ENCODE measurements at regions of chr12 and their contacts with region 1.

Region 1: DNA sequence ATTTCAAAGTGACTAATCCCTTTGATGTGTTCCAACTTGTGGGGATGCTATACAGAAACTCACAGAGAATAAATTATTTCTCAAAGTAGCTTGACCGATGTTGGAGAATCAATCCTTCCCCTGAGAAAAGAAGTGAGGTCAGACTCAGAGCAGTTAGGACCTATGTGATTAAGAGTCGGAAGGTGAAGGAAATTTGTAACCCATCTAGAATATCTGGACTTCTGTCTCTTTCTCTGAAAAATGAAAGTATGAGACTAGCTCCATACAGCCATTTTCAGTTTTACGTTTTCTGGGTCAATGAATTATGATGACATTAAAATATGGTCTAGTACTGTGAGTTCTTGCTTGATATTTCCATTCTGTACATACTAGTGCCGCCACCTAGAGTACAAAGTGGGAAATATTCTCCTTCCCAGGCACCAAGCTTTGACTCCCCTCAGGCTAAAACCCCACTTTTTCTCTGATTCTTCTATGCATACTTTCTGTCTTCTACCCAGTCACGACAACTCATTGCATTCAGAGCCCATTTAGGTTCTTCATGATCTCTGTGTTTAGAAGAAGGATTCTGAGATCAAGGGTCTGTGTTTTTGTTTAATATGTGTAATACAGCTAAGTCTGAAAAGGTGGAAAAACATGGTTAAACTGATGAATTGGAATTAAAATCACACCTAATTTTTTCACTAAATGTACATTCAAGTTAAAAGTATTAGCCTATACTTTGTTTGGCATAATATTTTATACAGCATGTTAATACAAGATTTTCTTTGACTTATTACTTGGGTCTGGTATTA is 6.9 kb upstream of the NTS start:
- DNase-seq: peak in 2 of 9 donors; percentile 2 to 10
- ATAC-seq: peak; percentile 45
- H3K4me3 ChIP-seq: no peak overlapping the region
- H3K4me3 Mint-ChIP-seq: no peak overlapping the region
- H3K27ac ChIP-seq: no peak overlapping the region
- H3K27ac Mint-ChIP-seq: no peak overlapping the region
- H3K4me1 ChIP-seq: no peaks in the 10 kb centered on the region
- H3K4me1 Mint-ChIP-seq: no peaks in the 10 kb centered on the region
- H3K27me3 ChIP-seq: no peaks in the 10 kb centered on the region
- H3K27me3 Mint-ChIP-seq: peaks cover 0 to 2% (median 0%) of the 10 kb centered on the region in 5 donors

Region 2: GRCh38 chr12:85468356-85469157 is 398.6 kb before region 1 on chr12:
- CTCF ChIA-PET with region 1: no interaction called
- POLR2A ChIA-PET with region 1: no interaction called
- intact Hi-C with region 1: loop called (anchors 1 kb)
- DNase-seq: peak in 6 of 9 donors; percentile 4 to 27 (median 14)
- ATAC-seq: peak; percentile 60
- H3K4me3 ChIP-seq: no peak overlapping the region
- H3K4me3 Mint-ChIP-seq: peak overlapping the region; percentile 48 to 92 (median 82)
- H3K27ac ChIP-seq: no peak overlapping the region
- H3K27ac Mint-ChIP-seq: peak overlapping the region in 5 of 9 donors; percentile 6 to 67 (median 45)
- H3K4me1 ChIP-seq: no peaks in the 10 kb centered on the region
- H3K4me1 Mint-ChIP-seq: peaks cover 0 to 18% (median 15%) of the 10 kb centered on the region in 7 donors
- H3K27me3 ChIP-seq: no peaks in the 10 kb centered on the region
- H3K27me3 Mint-ChIP-seq: peaks cover 0 to 6% (median 3%) of the 10 kb centered on the region in 5 donors

Region 3: DNA sequence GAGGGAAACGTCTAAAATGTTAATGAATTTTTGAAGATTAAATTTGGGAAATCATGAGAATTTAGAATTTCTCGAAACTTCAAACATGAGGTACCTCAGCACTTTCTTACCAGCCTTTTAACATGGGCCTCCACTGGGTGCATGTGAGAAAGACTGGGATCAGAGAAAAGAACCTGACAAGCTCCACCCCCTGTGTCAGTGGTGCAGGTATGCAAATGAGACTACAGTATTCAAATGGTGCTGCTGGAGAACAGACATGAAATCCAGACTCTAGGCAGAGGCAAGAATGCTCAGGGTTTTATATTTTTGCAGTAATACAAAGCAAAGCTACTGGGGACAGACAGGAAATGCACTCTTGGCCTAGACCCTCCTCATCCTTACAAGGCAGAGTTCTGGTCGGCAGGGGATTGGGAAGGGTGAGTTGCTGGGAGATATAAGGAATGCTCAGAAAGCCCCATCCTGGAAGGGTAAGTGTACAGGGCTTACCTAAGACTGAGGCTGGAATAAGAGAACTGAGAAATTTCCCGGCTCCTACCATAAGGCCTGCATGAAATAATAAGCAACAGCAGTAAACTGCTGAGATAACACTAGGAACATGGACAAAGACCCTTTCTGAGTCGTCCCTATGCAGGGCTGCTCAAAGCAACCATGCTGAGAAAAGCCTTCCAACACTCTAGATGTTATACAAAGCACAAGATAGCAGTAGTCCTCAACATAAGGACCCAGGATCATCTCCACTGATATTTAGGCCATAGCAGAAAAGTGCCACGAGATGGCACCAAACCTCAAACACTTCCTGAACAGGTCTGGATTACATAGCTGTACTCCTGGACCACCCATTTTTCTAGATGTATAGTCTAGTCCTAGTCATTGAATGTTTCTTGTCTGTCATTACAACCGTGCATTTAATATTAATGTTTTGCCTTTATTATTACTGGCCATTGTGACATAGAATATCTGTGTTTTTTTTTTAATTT is 291.8 kb before region 1 on chr12:
- CTCF ChIA-PET with region 1: no interaction called
- POLR2A ChIA-PET with region 1: no interaction called
- intact Hi-C with region 1: loop called in 1 of 2 experiments (anchors 1 kb)
- DNase-seq: peak in 1 of 9 donors; percentile 3
- ATAC-seq: no peak
- H3K4me3 ChIP-seq: no peak overlapping the region
- H3K4me3 Mint-ChIP-seq: no peak overlapping the region
- H3K27ac ChIP-seq: no peak overlapping the region
- H3K27ac Mint-ChIP-seq: no peak overlapping the region
- H3K4me1 ChIP-seq: no peaks in the 10 kb centered on the region
- H3K4me1 Mint-ChIP-seq: no peaks in the 10 kb centered on the region
- H3K27me3 ChIP-seq: no peaks in the 10 kb centered on the region
- H3K27me3 Mint-ChIP-seq: no peaks in the 10 kb centered on the region